ENCODE measurements at regions of chr1 and their contacts with region 1.

Region 1: GRCh38 chr1:209747580-209748262 is 8.1 kb upstream of the TRAF3IP3 start:
- DNase-seq: peak; percentile 87
- H3K4me3 ChIP-seq: peak overlapping the region; percentile 49
- H3K27ac ChIP-seq: peak overlapping the region; percentile 90
- H3K4me1 ChIP-seq: peaks cover 35% of the 10 kb centered on the region
- H3K27me3 ChIP-seq: no peaks in the 10 kb centered on the region
- CTCF ChIP-seq: peak; percentile 87

Region 2: DNA sequence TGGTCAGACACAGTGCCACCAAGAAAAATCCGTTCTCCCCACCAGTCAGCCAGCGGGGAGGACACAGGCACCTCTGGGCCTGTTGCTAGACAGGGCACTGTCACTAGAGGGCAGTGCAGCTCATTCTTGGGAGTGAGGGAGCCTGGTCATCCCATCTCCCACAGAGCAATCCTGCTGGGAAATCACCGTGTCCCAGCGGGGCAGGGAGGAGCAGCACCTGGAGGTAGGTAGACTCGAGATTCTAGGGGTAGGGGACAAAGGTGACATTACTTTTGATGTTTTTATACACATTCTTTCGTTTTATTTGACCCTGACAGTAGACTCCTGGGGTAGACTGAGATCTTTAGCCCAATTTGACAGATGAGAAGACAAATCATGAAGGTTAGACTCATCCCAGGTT is 170.9 kb before region 1 on chr1:
- intact Hi-C with region 1: loop called (anchors 10 kb)
- DNase-seq: peak; percentile 76
- H3K4me3 ChIP-seq: no peak overlapping the region
- H3K27ac ChIP-seq: no peak overlapping the region
- H3K4me1 ChIP-seq: no peaks in the 10 kb centered on the region
- H3K27me3 ChIP-seq: peaks cover 38% of the 10 kb centered on the region
- CTCF ChIP-seq: peak; percentile 98

Region 3: DNA sequence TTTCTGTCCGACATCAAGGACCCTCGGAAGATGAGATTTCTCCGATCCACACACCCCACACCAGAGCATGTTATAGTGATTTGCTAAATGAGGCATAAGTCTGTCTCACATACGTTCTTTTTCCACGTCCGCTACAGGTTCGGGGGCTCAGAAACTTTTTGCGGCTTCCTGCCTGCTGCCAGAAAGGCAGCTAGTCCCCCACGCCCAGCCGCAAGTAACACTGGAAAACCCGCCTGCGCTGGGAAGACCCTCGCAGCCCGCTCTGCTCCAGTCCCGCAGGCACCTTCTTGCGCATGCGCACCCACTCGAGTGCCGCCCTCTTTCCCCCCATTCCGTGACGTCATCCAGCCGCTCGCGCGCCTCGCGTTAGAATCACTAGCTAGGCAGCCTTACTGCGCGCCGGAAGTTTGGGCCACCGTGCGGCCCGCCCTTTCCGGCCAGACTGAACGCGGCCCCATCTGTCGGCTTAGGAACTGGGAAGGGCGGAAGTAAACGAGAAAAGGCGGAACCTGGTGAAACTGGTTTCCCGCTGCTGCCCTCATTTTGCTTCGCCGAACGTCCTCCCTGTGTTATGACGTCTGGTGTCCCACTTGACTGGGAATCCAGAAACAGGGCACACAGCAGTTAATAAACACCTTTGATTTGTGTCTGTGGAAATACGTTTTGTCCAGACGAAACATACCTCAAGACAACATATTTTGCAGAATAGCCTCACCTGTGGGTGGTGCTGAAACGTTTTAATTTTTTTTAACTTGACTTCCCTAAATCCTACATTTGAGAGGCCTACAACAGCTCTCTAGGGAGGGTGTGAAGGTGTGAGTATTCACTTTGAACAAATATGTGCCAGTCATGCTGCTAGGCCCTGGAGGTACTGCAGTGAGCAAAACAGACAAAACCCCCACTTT is 36.8 kb after region 1 on chr1 and contains the start of gene C1orf74:
- intact Hi-C with region 1: no loop called
- DNase-seq: peak; percentile 99
- H3K4me3 ChIP-seq: peak within 1 kb of the TSS; percentile 75
- H3K27ac ChIP-seq: peak within 1 kb of the TSS; percentile 89
- H3K4me1 ChIP-seq: peaks cover 66% of the 10 kb centered on the region
- H3K27me3 ChIP-seq: no peaks in the 10 kb centered on the region
- CTCF ChIP-seq: no peak
- total RNA-seq, gene C1orf74: 1.9 TPM

Measured in left ventricle myocardium inferior (tissue), 1 donor.